Colonic mucosa (tissue), 4 donors: ENCODE measurements at regions of chr22 and their contacts with region 1.

Region 1: GRCh38 chr22:38230108-38230825 is 28.5 kb downstream of the MAFF start:
- DNase-seq: peak; percentile 85
- H3K4me3 ChIP-seq: no peak overlapping the region
- H3K27ac ChIP-seq: peak overlapping the region; percentile 50
- H3K4me1 ChIP-seq: peaks cover 18% of the 10 kb centered on the region
- H3K27me3 ChIP-seq: no peaks in the 10 kb centered on the region
- CTCF ChIP-seq: peak; percentile 52

Region 2: GRCh38 chr22:37930270-37930951 is 299.9 kb before region 1 on chr22:
- intact Hi-C with region 1: no loop called
- DNase-seq: no peak
- H3K4me3 ChIP-seq: no peak overlapping the region
- H3K27ac ChIP-seq: no peak overlapping the region
- H3K4me1 ChIP-seq: peaks cover 4% of the 10 kb centered on the region
- H3K27me3 ChIP-seq: no peaks in the 10 kb centered on the region
- CTCF ChIP-seq: peak; percentile 27

Region 3: DNA sequence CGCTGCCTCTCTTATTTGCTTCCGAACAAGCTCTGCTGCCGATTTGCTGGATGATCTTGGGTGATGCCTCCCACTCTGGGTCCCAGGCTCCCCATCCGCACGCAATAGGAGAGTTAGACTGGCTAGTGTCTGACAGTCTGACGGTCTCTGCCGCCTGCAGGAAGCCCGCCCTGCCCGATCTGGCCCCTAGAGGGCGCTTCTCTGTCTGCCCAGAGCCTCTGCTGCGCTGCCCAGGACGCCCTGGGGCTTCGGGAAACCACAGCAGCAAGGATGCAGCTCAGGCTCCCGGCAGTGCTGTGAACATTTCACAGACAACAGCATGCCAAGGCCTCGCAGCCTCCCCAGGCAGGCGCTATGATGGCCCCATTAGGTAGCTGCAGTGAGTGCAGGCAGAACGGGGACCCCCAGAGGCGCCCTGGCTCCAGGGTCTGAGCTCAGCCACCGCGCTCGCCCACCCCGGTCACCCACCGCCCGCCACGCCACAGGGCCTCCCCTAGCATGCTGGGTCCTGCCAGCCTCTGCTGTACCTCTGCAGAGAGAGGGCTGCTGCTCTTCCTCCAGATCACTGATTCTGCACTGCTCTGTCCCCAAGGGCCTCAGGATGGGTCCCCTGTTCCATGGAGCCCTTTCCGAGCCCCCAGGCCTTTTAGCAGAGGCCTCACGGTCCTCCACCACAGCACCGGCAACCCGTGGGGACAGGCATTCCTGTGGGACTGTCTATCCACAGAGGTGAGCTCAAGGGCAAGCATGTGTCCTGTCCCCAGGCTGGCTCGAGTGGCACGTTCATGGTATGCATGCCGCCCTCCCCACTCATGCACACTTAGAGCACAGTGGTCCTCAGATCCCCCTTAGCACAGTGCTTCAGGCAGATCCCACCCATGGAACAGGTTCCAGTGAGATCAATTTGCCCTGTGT is 115.5 kb before region 1 on chr22:
- intact Hi-C with region 1: loop called (anchors 10 kb)
- DNase-seq: peak; percentile 88
- H3K4me3 ChIP-seq: no peak overlapping the region
- H3K27ac ChIP-seq: no peak overlapping the region
- H3K4me1 ChIP-seq: peaks cover 9% of the 10 kb centered on the region
- H3K27me3 ChIP-seq: no peaks in the 10 kb centered on the region
- CTCF ChIP-seq: peak; percentile 96

Region 4: DNA sequence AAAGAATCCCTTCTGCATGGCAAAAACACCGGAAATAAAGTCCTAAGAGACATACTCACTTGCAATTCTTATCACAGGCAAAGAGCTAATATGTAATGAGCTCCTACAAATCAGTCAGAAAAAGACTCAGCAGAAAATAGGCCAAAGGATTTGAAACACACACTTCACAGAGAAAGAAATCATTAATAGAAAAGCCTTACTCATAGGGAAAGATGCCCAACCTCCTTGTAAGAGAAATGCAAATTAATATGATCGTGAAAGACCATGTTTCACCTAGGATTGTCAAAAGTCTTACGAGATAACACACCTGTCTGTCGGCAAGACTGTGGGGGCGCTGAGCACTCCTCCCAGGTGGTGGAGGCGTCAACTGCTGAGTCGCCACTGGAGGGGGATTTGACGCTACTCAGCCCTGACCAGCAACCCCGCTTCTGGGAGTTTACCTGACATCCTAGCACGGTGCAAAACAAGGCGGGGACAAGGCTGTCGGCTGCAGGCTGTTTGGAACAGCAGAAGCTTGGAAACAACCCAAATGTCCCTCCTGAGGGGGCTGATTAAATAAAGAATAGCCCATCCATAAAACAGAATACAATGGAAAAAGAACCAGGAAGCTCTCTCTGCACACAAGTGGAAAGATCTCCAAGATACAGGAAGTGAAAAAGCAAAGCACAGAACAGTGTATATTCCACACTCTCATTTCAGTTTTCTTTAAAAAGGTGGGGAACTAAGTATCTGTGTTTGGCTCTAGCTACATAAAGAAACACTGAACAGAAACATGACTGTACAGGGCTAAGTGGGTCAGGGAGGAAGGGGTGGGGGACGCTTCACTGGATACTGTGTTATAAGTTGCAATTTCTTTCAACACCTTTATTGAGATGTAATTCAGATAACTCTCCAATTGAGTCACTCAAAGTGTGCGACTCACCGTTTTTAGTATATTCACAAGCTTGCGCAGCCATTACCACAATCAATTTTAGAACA is 75.5 kb after region 1 on chr22:
- intact Hi-C with region 1: no loop called
- DNase-seq: peak; percentile 64
- H3K4me3 ChIP-seq: no peak overlapping the region
- H3K27ac ChIP-seq: peak overlapping the region; percentile 68
- H3K4me1 ChIP-seq: peaks cover 7% of the 10 kb centered on the region
- H3K27me3 ChIP-seq: no peaks in the 10 kb centered on the region
- CTCF ChIP-seq: no peak

Region 5: GRCh38 chr22:38549495-38549894 is 319.2 kb after region 1 on chr22:
- intact Hi-C with region 1: no loop called
- DNase-seq: no peak
- H3K4me3 ChIP-seq: no peak overlapping the region
- H3K27ac ChIP-seq: no peak overlapping the region
- H3K4me1 ChIP-seq: no peaks in the 10 kb centered on the region
- H3K27me3 ChIP-seq: no peaks in the 10 kb centered on the region
- CTCF ChIP-seq: no peak

Region 6: DNA sequence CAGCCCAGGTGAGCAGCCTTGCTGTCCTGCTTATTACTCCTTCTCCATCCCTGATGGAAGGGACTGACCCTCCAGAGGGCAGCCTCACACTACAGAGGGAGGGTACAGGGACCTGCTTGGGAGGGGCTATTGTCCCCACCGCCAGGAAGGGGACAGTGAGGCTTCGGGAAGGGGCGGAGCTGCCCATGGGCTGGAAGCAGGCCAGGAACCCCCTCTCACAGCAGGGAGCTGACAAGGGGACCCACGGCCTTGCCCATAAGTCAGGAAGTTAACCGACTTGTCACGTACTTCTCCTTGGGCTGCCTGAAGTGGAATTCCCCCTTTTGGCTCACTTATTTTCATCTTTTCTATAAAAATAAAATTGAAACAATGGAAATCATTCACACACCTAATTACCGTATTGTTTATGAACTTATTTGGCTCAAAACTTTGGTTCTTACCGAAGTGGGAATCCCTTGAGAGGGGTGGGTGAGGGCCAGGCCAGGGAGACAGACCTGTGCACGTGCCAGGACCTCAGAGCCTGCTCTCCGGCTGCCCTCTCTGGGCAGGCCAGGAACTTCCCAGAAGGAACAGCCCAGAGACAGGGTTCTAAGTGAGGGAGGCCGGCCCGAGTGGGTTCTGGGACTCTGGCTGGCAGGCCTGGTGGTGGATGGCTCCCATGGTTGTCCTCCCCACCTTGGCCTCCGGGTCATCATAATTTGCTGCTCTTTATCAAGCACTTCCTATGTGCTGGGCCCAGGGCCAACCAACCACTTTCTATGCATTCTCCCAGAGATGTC is 1232.4 kb after region 1 on chr22:
- intact Hi-C with region 1: no loop called
- DNase-seq: no peak
- H3K4me3 ChIP-seq: no peak overlapping the region
- H3K27ac ChIP-seq: peak overlapping the region; percentile 3
- H3K4me1 ChIP-seq: no peaks in the 10 kb centered on the region
- H3K27me3 ChIP-seq: peaks cover 16% of the 10 kb centered on the region
- CTCF ChIP-seq: no peak